Left ventricle myocardium superior (tissue), 1 donor: ENCODE measurements at regions of chr3 and their contacts with region 1.

Region 1: GRCh38 chr3:41503998-41504623 is 304.8 kb downstream of the CTNNB1 start:
- DNase-seq: no peak
- ATAC-seq: no peak

Region 2: DNA sequence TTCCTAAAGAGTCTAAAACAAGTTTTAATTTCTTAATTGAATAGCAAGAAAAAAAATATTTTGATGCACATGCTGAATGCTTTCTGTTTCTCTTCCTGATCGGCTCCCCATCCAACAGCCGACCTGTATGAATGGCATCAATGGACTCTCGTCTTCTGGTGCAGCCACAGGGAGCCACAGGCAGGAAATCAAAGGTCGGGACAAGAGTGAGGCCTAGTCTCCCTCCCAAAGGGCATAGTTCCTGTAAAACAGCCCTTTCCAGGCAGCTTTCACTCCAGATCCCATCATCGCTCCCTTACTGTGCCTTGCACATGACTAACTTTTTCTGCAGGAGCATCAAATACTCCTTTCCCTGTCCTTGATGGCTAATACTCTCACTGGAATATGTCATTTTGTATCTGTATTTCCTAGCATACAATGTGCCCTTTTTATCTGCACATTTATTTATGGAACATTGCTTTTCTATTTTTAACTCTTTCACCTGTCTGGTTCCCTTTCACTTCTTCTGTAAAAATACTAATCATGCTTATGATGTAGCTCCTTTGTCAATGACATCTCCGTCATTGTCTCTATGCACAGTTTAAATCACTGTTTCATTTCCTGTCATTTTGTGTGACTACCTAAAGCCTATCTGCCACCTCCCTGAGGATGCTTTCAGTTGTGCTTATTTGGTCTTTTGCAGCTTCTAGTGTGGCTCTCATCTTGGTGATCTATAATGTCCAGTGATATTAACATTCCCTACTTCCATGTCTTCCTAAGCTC is 21.4 kb after region 1 on chr3:
- intact Hi-C with region 1: loop called (anchors 2 kb)
- DNase-seq: no peak
- ATAC-seq: no peak